AG04450 (cell line): ENCODE measurements at regions of chr7 and their contacts with region 1.

Region 1: GRCh38 chr7:5704534-5704922 is 76.9 kb downstream of the RNF216 start:
- DNase-seq: peak; percentile 69
- H3K4me3 ChIP-seq: no peak overlapping the region
- H3K27ac ChIP-seq: no peak overlapping the region
- H3K27me3 ChIP-seq: no peaks in the 10 kb centered on the region
- CTCF ChIP-seq: peak; percentile 96

Region 2: GRCh38 chr7:5494683-5495561 is 209.6 kb before region 1 on chr7:
- CTCF ChIA-PET with region 1: interaction called, 42 read pairs
- POLR2A ChIA-PET with region 1: no interaction called
- DNase-seq: no peak
- H3K4me3 ChIP-seq: no peak overlapping the region
- H3K27ac ChIP-seq: peak overlapping the region; percentile 31
- H3K27me3 ChIP-seq: no peaks in the 10 kb centered on the region
- CTCF ChIP-seq: peak; percentile 98